Testis (tissue), 5 donors: ENCODE measurements at regions of chr18 and their contacts with region 1.

Region 1: DNA sequence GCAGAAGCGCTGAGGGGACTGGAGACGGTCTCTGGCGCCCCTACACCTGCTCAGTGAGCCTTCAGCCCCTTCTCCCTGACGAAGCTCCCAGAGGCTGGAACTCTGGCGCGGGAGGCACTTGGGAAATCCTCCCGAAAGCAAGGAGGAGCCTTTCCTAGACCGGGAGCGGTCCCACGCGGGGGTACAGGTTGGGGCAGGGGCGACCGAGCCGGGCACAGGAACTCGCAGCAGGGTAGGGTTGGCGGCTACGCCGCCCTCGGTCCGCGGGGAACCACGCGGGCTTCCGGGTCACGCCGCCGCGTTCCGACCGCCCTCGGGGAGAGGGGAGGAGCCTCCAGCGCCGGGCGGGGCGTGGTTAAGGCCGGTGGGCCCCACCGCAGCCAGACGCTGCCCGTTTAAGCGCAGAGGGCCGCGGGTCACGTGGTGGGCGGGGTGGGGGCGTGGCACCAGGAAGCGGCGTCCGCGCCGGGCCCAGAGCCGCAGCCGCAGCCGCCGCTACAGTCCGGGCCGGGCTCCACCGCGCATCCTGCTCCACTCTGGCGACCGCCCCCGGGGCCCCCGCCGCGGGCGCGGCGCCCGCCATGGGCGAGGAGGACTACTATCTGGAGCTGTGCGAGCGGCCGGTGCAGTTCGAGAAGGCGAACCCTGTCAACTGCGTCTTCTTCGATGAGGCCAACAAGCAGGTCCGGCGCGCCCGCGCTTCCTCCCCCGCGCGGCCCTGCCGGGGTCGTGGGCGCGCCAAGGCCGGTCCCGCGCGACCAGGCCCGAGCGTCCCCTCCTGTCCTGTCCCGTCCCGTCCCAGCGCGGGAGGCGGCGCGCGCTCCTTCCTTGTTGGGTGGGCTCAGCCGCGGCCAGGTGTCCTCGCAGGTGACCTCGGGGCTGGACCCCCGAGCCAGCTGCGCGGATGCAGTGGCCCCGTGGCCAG is at the start of gene RMC1:
- DNase-seq: peak; percentile 94
- H3K4me3 ChIP-seq: peak within 1 kb of the TSS; percentile 94 to 95
- H3K27ac ChIP-seq: peak within 1 kb of the TSS; percentile 91 to 92
- H3K4me1 ChIP-seq: peaks cover 15% of the 10 kb centered on the region
- H3K27me3 ChIP-seq: no peaks in the 10 kb centered on the region
- CTCF ChIP-seq: peak in 1 of 3 experiments; percentile 24
- POLR2A ChIP-seq: no peak
- total RNA-seq, gene RMC1: 33.5 to 44.2 TPM

Region 2: GRCh38 chr18:23452728-23453679 is 50.3 kb before region 1 on chr18 and contains the start of gene RIOK3:
- intact Hi-C with region 1: no loop called
- DNase-seq: peak; percentile 98
- H3K4me3 ChIP-seq: peak within 1 kb of the TSS; percentile 85 to 97
- H3K27ac ChIP-seq: peak within 1 kb of the TSS; percentile 86 to 89
- H3K4me1 ChIP-seq: peaks cover 16% of the 10 kb centered on the region
- H3K27me3 ChIP-seq: no peaks in the 10 kb centered on the region
- CTCF ChIP-seq: no peak
- POLR2A ChIP-seq: peak; percentile 26
- total RNA-seq, gene RIOK3: 41.7 to 68.7 TPM

Region 3: DNA sequence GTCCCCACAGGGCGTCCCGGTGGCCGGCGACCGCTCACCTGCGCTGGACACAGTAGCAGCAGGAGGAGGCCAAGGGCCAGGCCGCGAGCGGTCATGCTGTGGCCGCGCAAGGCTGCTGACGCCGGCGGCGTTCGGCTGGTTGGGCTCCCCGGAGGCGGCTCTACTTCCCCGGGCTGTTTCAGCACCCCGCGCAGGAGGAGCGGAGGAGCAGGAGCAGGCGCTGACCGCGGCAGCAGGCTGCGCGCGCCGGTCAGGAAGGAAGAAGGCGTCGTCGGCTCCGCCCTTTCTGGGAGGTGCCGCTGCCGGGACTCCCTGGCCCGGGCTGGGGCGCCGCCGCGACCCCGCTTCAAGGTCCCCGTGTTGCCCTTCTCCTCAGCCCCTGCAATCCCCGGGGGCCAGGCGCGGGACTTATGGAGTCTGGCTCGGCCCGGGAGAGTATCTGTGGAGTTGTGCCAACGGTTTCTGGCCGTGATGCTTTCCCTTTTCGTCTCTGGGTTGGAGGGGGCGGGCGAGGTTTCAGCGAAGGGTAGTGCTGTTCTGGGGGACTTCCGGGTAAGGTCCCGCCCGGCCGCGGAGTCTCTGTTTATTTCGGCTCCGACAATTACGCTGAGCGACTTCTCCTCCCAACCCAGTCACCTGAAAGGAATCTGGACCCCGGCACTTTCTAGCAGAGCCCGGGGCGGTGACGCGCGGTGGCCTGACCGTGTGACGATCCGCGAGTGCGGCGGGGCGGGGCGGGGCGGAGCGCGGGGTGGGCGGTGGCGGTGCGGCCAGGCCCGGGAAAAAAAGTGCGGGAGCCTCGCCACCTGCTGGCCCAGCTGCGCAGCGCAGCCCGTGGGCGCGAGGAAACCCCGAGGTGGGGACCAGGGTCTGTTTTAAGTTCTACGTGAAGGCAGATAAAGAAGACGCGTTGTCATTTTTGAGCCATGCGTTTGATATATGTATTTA is 83.2 kb after region 1 on chr18 and contains the start of gene NPC1:
- intact Hi-C with region 1: loop called (anchors 5 kb)
- DNase-seq: peak; percentile 93
- H3K4me3 ChIP-seq: peak within 1 kb of the TSS; percentile 65 to 79
- H3K27ac ChIP-seq: peak within 1 kb of the TSS; percentile 92 to 99
- H3K4me1 ChIP-seq: peaks cover 21% of the 10 kb centered on the region
- H3K27me3 ChIP-seq: no peaks in the 10 kb centered on the region
- CTCF ChIP-seq: peak; percentile 76 to 94 (median 91)
- POLR2A ChIP-seq: no peak
- total RNA-seq, gene NPC1: 66.8 to 83.2 TPM